Activated T-helper 2 cell treated with anti-CD3 and anti-CD28 coated beads, Interferon-gamma antibody, Interleukin-2, Interleukin-4, amounts not matched to agents 10 μg/mL and 5 μg/mL and 100 μg/mL, durations not matched to agents 14 hours and 24 hours and 36 hours (primary cell): ENCODE measurements at regions of chr15 and their contacts with region 1.

Region 1: DNA sequence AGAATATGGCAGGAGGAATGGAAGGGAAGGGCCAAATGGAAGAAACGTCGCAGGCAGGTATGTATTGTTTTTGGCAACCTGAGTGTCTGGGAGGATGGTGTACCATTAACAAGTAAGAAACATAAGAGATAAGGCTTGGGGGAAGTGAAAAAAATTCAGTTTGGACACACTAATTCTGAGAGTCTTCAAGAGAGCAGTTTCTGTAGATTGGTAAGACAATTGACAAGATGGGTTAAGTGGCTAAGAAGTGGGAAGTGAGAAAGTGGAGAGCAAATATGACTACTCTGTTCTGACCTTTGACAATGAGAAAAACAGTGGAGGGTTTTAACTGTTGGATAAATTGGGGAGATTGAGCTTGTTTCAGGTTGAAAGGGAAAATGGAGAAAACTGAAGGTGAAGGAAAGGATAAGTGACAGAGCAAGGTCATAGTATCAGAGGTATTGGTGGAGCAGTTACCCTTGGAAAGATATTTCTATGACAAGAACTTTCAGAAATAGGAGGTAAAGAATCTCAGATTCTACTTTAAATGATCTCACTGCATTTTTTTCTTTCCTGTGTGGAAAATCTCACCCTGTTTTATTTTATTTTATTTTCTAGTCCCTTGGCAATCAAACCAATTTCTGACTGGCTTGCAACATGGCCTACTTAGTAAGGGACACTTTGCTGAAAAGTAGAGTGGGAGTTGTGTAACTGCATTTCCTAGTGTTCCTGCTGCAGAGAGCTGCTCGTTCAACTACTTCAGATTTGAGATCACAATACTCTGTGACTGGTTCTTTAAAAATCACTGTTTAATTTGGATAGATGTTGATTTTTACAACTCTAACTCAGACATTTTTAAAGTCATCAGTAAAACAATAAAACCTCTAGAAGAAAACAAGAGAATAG is 23.1 kb upstream of the GABPB1 start:
- DNase-seq: no peak
- H3K4me3 Mint-ChIP-seq: peak overlapping the region; percentile 51
- H3K27ac Mint-ChIP-seq: peak overlapping the region; percentile 92
- H3K4me1 Mint-ChIP-seq: peaks cover 18% of the 10 kb centered on the region
- H3K27me3 Mint-ChIP-seq: no peaks in the 10 kb centered on the region

Region 2: DNA sequence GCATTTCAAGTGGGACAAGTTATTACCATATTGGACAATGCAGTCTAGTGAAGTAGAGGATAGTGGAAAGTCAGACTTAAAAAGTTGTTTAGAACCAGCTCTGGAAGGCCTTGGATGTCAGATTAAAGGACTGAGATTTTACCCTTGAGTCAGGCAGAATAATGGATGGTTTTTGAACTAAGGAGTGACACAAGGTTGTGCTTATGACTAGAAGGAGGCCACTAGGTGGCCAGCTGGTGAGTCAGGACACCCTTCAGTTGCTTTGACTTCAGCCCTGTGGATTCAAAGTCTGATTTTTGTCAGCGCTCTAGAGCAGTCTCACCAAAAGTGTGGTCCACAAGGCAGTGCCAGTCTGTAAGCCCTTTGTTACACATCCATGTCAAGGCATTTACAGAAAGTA is 19.3 kb before region 1 on chr15:
- intact Hi-C with region 1: no loop called
- DNase-seq: no peak
- H3K4me3 Mint-ChIP-seq: no peak overlapping the region
- H3K27ac Mint-ChIP-seq: no peak overlapping the region
- H3K4me1 Mint-ChIP-seq: peaks cover 23% of the 10 kb centered on the region
- H3K27me3 Mint-ChIP-seq: no peaks in the 10 kb centered on the region

Region 3: DNA sequence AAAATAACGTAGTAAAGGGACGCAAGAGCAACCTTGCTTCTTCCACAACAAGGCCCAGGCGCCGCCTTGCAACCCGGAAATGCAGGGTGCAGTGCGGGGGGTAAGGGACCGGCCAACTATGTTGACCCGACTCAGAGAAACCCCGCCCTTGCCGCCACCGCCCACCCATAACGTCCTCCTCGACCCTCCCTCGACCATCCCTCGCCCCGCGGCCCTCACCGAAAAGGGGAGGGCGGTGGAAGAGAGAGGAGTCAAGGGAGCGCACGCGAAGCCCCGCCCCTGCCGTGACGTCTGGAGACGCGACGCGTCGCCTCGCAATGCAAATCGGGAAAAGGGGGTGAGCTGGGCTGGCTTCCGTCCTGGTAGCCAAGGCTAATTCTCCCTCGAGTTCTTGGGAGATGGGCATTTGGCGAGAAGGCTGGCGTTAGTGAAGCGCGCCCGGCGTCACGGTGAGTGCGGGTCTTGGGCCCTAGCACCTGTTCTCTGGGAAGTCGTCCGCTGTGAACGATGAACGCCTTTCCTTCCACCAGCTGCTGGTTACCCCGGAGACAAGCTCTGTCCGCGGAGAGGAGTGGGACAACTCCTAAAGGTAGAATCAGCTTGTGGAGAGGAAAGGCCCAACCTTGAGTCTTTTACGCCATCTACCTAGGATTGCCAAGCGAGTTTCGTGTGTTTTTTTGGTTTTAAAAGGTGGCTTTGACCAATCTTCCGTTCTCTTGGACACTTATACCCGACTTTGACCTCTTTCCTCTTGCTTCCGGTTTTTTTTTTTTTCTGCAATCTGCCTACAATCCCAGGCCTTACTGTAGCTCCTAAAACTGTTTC is 46.2 kb after region 1 on chr15 and contains the start of gene USP8:
- intact Hi-C with region 1: loop called (anchors 1 kb)
- DNase-seq: peak; percentile 93
- H3K4me3 Mint-ChIP-seq: peak within 1 kb of the TSS; percentile 95
- H3K27ac Mint-ChIP-seq: peak within 1 kb of the TSS; percentile 85
- H3K4me1 Mint-ChIP-seq: peaks cover 16% of the 10 kb centered on the region
- H3K27me3 Mint-ChIP-seq: no peaks in the 10 kb centered on the region
- total RNA-seq, gene USP8: 57.2 and 57.4 TPM in 2 replicates

Region 4: DNA sequence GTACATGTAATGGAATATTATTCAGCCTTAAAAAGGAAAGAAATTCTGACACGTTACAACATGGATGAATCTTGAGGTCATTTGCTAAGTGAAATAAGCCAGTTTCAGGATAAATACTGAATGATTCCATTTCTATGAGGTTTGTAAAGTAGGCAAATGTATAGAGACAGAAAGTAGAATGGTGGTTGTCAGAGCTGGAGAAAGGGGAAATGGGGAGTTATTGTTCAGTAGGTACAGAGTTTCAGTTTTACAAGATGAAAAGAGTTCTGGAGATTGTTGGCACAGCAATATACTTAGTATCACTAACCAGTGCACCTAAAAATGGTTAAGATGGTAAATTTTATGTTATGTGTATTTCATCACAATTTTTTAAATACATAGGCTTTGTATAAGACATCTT is 106.7 kb after region 1 on chr15:
- intact Hi-C with region 1: loop called (anchors 1 kb)
- DNase-seq: no peak
- H3K4me3 Mint-ChIP-seq: no peak overlapping the region
- H3K27ac Mint-ChIP-seq: peak overlapping the region; percentile 38
- H3K4me1 Mint-ChIP-seq: peaks cover 26% of the 10 kb centered on the region
- H3K27me3 Mint-ChIP-seq: no peaks in the 10 kb centered on the region

Region 5: DNA sequence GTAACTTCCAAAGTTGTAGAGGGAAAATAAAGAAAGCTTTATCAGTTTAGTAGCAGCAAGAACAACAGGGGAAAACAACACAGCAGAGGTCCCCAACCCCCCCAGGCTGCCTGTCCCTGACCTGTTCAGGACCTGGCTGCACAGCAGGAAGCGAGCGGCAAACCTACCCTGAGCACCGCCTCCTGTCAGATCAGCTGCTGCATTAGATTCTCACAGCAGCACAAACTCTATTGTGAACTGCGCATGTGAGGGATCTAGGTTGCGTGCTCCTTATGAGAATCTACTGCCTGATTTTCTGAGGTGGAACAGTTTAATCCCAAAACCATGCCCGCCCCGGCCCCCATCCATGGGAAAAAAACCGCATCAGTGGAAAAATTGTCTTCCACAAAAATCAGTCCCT is 128.0 kb after region 1 on chr15:
- intact Hi-C with region 1: no loop called
- DNase-seq: no peak
- H3K4me3 Mint-ChIP-seq: no peak overlapping the region
- H3K27ac Mint-ChIP-seq: no peak overlapping the region
- H3K4me1 Mint-ChIP-seq: peaks cover 12% of the 10 kb centered on the region
- H3K27me3 Mint-ChIP-seq: no peaks in the 10 kb centered on the region

Region 6: DNA sequence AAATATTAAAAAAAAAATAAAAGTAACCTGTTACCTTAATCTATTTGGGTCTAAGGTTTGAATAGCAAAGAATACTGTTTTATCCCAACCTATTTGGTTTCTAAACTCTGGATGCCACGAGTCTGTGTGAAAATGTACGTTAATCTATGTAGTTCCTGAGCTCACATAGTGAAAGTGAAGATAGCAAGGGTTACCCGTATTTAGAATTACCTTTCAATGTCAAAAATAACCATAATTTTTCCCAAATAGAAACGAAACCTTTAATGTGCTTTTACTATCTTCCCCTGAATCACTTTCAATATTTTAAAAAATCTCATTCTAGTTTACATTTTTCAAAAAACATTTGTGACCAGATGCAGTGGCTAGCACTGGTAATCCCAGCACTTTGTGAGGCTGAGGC is 174.1 kb after region 1 on chr15:
- intact Hi-C with region 1: loop called (anchors 5 kb)
- DNase-seq: no peak
- H3K4me3 Mint-ChIP-seq: no peak overlapping the region
- H3K27ac Mint-ChIP-seq: no peak overlapping the region
- H3K4me1 Mint-ChIP-seq: peaks cover 19% of the 10 kb centered on the region
- H3K27me3 Mint-ChIP-seq: no peaks in the 10 kb centered on the region

Region 7: GRCh38 chr15:50765195-50765973 is 387.3 kb after region 1 on chr15 and contains the start of gene SPPL2A:
- intact Hi-C with region 1: loop called (anchors 1 kb)
- DNase-seq: peak; percentile 78
- H3K4me3 Mint-ChIP-seq: peak within 1 kb of the TSS; percentile 99
- H3K27ac Mint-ChIP-seq: peak within 1 kb of the TSS; percentile 99
- H3K4me1 Mint-ChIP-seq: peaks cover 48% of the 10 kb centered on the region
- H3K27me3 Mint-ChIP-seq: no peaks in the 10 kb centered on the region
- total RNA-seq, gene SPPL2A: 97.3 and 99.0 TPM in 2 replicates